Gastrocnemius medialis (tissue), 4 donors: ENCODE measurements at regions of chr7 and their contacts with region 1.

Region 1: DNA sequence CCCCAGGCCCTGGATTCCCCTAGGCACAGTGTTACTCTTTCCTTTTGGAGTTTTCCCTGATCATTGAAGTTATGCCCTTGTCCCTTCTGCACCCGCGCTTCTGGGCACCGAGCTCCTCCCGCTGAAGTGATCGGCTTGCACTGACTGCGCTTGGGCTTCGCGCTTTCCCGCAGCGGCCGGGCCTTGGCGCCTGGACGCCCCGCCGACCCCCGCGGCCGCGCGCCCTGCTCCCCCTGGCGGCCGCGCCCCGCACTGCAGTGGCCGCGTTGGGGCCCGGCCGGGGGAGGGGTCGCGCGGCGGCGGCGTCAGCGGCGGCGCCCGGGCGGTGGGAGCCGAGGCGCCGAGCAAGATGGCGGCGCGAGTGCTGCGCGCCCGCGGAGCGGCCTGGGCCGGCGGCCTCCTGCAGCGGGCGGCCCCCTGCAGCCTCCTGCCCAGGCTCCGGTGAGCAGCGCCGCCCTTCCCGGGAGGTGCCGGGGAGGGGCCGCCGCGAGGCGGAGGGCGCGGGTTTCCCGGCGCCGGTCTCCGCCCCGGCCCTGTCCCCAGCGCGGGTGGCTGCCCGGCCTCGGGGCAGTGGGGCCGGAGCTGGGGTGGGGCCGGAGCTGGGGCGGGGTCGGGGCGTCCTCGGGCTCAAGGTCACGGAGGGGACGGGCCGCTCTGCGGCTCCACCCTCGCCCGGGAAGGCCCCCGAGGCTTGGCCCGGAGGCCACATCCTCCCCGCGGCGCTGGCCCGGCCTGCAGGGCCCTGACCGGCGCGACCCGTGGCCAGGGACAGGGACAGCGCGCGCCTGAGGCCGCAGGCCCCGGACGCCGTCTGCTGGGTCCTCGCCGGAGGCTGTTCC is at the start of gene NIPSNAP2:
- DNase-seq: peak; percentile 67 to 83
- ATAC-seq: peak; percentile 58 to 72
- H3K4me3 ChIP-seq: peak within 1 kb of the TSS; percentile 68 to 71 (median 70)
- H3K27ac ChIP-seq: peak within 1 kb of the TSS; percentile 96 to 98 (median 97)
- H3K4me1 ChIP-seq: peaks cover 42 to 47% of the 10 kb centered on the region in 2 donors
- H3K27me3 ChIP-seq: no peaks in the 10 kb centered on the region
- CTCF ChIP-seq: peak; percentile 36 to 96 (median 86)
- POLR2A ChIP-seq: peak; percentile 79 to 91
- total RNA-seq, gene NIPSNAP2: 234 to 382 (median 354) TPM

Region 2: GRCh38 chr7:55255496-55256435 is 708.7 kb before region 1 on chr7:
- in situ Hi-C with region 1: no loop called
- intact Hi-C with region 1: no loop called
- DNase-seq: peak; percentile 66 to 78
- ATAC-seq: peak; percentile 91 to 94
- H3K4me3 ChIP-seq: peak overlapping the region; percentile 60 to 66 (median 62)
- H3K27ac ChIP-seq: peak overlapping the region in 3 of 4 donors; percentile 25 to 47 (median 30)
- H3K4me1 ChIP-seq: peaks cover 5 to 15% of the 10 kb centered on the region in 2 donors
- H3K27me3 ChIP-seq: peaks cover 0 to 2% (median 0%) of the 10 kb centered on the region in 3 donors
- CTCF ChIP-seq: peak; percentile 85 to 98 (median 95)
- POLR2A ChIP-seq: no peak

Region 3: DNA sequence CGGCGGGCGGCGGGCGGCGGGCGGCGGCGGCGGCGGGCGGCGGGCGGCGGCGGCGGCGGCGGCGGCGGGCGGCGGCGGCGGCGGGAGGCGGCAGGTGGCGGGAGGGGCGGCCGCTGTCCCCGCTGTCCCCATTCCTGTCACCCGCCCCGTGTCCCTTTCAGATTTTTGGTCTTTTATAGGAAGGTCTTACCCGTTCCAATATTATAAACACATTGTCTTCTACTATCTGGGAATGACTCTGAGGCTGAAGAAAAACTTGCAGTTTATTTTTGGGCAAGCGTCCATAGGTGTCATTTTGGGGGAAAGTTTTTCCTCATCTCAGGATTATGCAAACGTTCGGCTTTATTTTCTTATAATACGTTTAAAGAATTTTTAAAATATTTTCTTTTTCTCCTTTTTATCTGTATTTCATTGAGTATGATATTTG is 76.6 kb before region 1 on chr7:
- in situ Hi-C with region 1: no loop called
- intact Hi-C with region 1: no loop called
- DNase-seq: no peak
- ATAC-seq: no peak
- H3K4me3 ChIP-seq: peak overlapping the region; percentile 54 to 83 (median 60)
- H3K27ac ChIP-seq: peak overlapping the region; percentile 75 to 81 (median 79)
- H3K4me1 ChIP-seq: no peaks in the 10 kb centered on the region
- H3K27me3 ChIP-seq: no peaks in the 10 kb centered on the region
- CTCF ChIP-seq: no peak
- POLR2A ChIP-seq: no peak

Region 4: GRCh38 chr7:55951637-55952351 is 12.7 kb before region 1 on chr7 and contains the start of gene MRPS17:
- in situ Hi-C with region 1: no loop called
- intact Hi-C with region 1: loop called (anchors 1 kb)
- DNase-seq: peak; percentile 82 to 91
- ATAC-seq: peak; percentile 98 to 99
- H3K4me3 ChIP-seq: peak within 1 kb of the TSS; percentile 78 to 99 (median 82)
- H3K27ac ChIP-seq: peak within 1 kb of the TSS; percentile 86 to 90 (median 88)
- H3K4me1 ChIP-seq: peaks cover 9 to 12% of the 10 kb centered on the region in 2 donors
- H3K27me3 ChIP-seq: no peaks in the 10 kb centered on the region
- CTCF ChIP-seq: peak in 1 of 5 experiments; percentile 36
- POLR2A ChIP-seq: peak; percentile 74 to 76
- total RNA-seq, gene MRPS17: 14.0 to 38.3 (median 22.0) TPM